ENCODE measurements at regions of chr6 and their contacts with region 1.

Region 1: GRCh38 chr6:36979347-36979742 is 6.7 kb downstream of the MTCH1 start:
- DNase-seq: peak in 2 of 3 donors; percentile 49 to 54
- ATAC-seq: peak; percentile 65 to 86 (median 76)
- H3K4me3 ChIP-seq: no peak overlapping the region
- H3K27ac ChIP-seq: no peak overlapping the region
- H3K4me1 ChIP-seq: peaks cover 0 to 12% (median 2%) of the 10 kb centered on the region in 4 donors
- H3K27me3 ChIP-seq: no peaks in the 10 kb centered on the region
- CTCF ChIP-seq: peak; percentile 44 to 60 (median 48)
- POLR2A ChIP-seq: no peak

Region 2: GRCh38 chr6:35980991-35981660 is 998.2 kb before region 1 on chr6:
- intact Hi-C with region 1: no loop called
- DNase-seq: no peak
- ATAC-seq: no peak
- H3K4me3 ChIP-seq: no peak overlapping the region
- H3K27ac ChIP-seq: no peak overlapping the region
- H3K4me1 ChIP-seq: peaks cover 0 to 12% (median 0%) of the 10 kb centered on the region in 4 donors
- H3K27me3 ChIP-seq: no peaks in the 10 kb centered on the region
- CTCF ChIP-seq: no peak
- POLR2A ChIP-seq: no peak

Region 3: DNA sequence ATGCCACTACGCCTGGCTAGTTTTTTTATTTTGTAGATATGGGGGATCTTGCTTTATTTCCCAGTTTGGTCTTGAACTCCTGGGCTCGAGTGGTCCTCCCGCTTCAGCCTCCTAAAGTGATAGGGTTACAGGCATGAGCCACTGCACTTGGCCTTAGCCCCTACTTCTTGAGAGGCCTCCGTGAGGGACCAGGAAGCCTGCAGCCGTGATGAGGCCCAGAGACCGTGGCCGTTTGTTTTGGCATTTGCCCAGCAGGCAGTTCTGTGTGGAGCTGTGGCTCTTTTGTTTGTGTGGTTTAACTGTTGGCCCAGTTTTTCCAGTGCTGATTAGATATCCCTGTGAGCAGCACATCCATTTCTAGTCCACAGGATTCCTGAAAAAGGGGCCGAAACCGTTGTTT is 345.4 kb before region 1 on chr6:
- intact Hi-C with region 1: no loop called
- DNase-seq: peak; percentile 82 to 87 (median 83)
- ATAC-seq: peak; percentile 87 to 93 (median 90)
- H3K4me3 ChIP-seq: no peak overlapping the region
- H3K27ac ChIP-seq: peak overlapping the region in 1 of 3 donors; percentile 31
- H3K4me1 ChIP-seq: peaks cover 0 to 27% (median 10%) of the 10 kb centered on the region in 4 donors
- H3K27me3 ChIP-seq: no peaks in the 10 kb centered on the region
- CTCF ChIP-seq: no peak
- POLR2A ChIP-seq: no peak

Region 4: GRCh38 chr6:36897609-36898008 is 81.7 kb before region 1 on chr6:
- intact Hi-C with region 1: loop called (anchors 10 kb)
- DNase-seq: no peak
- ATAC-seq: peak in 3 of 4 donors; percentile 39 to 71 (median 48)
- H3K4me3 ChIP-seq: no peak overlapping the region
- H3K27ac ChIP-seq: no peak overlapping the region
- H3K4me1 ChIP-seq: no peaks in the 10 kb centered on the region
- H3K27me3 ChIP-seq: no peaks in the 10 kb centered on the region
- CTCF ChIP-seq: peak in 3 of 4 donors; percentile 5 to 37 (median 30)
- POLR2A ChIP-seq: no peak

Region 5: GRCh38 chr6:37125783-37126492 is 146.6 kb after region 1 on chr6:
- intact Hi-C with region 1: no loop called
- DNase-seq: no peak
- ATAC-seq: no peak
- H3K4me3 ChIP-seq: no peak overlapping the region
- H3K27ac ChIP-seq: no peak overlapping the region
- H3K4me1 ChIP-seq: peaks cover 0 to 30% (median 11%) of the 10 kb centered on the region in 4 donors
- H3K27me3 ChIP-seq: no peaks in the 10 kb centered on the region
- CTCF ChIP-seq: no peak
- POLR2A ChIP-seq: no peak

Measured in right lobe of liver (tissue), 6 donors.